ENCODE measurements at regions of chr1 and their contacts with region 1.

Region 1: DNA sequence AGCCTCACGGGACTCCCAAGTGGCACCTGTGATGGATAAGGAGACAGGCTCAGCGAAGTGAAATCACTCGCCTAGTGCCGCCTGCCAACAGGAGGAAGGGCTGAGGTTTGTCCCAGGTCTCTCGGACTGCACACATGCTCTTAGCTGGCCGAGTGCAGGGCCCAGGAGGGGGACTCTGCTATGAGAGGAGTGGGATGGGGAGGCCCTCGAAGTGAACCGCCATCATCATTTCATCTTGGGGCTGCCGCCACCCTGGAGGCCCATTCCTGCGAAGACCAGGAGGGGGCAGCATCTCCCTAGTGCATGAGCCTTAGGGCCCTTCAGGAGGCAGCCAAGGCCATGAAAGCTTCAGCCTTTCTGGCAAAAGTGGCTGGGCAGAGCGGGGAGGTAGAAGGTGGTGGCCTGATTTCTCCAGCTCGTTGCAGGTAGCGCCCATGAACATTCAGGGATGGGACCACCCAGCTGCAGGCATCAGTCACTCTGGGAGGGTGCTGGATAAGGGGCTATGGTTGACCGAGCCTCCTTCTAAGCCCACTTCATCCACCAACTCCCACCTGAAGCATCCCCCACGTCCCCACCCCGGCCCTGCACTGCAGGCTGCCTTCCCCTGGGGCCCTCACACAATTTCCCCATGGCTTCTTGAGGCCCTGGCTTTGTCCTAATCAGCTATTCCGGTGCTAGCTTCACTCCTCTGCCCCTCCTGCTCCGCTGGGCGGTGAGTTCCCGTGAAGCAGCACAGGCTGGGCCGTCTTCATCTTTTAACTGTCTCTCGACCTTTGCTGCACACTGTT is 17.2 kb upstream of the RASSF5 start:
- DNase-seq: peak; percentile 47
- H3K4me3 ChIP-seq: no peak overlapping the region
- H3K27ac ChIP-seq: no peak overlapping the region
- H3K4me1 ChIP-seq: no peaks in the 10 kb centered on the region
- H3K27me3 ChIP-seq: no peaks in the 10 kb centered on the region
- CTCF ChIP-seq: peak; percentile 94 to 100

Region 2: DNA sequence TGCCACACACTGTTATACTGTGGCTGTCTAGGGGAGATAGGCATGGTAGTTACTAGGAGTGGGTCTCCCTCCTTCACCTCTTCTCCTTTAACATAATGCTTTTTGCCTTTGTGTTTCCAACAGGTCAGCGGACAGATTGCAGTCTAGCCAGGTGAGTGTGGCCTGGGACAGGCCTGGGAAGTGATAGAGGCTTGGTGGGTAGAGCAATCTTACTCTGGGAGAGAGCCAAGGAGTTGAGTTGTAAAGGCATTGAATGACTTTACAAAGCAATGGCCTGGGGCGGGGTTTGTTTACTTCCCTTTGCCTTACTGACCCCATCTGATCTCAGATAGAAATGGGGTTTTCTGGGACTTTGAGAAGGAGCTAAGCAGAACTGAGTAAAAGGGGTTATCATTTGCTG is 70.9 kb before region 1 on chr1:
- CTCF ChIA-PET with region 1: no interaction called
- dilution Hi-C with region 1: no loop called
- in situ Hi-C with region 1: no loop called
- intact Hi-C with region 1: no loop called
- DNase-seq: peak; percentile 41
- H3K4me3 ChIP-seq: no peak overlapping the region
- H3K27ac ChIP-seq: peak overlapping the region; percentile 26
- H3K4me1 ChIP-seq: peaks cover 19% of the 10 kb centered on the region
- H3K27me3 ChIP-seq: no peaks in the 10 kb centered on the region
- CTCF ChIP-seq: no peak

Region 3: GRCh38 chr1:206521143-206521542 is 31.0 kb after region 1 on chr1:
- CTCF ChIA-PET with region 1: no interaction called
- dilution Hi-C with region 1: no loop called
- in situ Hi-C with region 1: no loop called
- intact Hi-C with region 1: no loop called
- DNase-seq: no peak
- H3K4me3 ChIP-seq: no peak overlapping the region
- H3K27ac ChIP-seq: no peak overlapping the region
- H3K4me1 ChIP-seq: peaks cover 12% of the 10 kb centered on the region
- H3K27me3 ChIP-seq: no peaks in the 10 kb centered on the region
- CTCF ChIP-seq: no peak

Region 4: GRCh38 chr1:206534552-206534951 is 44.4 kb after region 1 on chr1:
- CTCF ChIA-PET with region 1: no interaction called
- dilution Hi-C with region 1: loop called (anchors 5 kb)
- in situ Hi-C with region 1: no loop called
- intact Hi-C with region 1: no loop called
- DNase-seq: no peak
- H3K4me3 ChIP-seq: no peak overlapping the region
- H3K27ac ChIP-seq: no peak overlapping the region
- H3K4me1 ChIP-seq: peaks cover 17% of the 10 kb centered on the region
- H3K27me3 ChIP-seq: no peaks in the 10 kb centered on the region
- CTCF ChIP-seq: no peak

Region 5: GRCh38 chr1:206590025-206590758 is 100.0 kb after region 1 on chr1:
- CTCF ChIA-PET with region 1: interaction called, 4 read pairs
- dilution Hi-C with region 1: loop called (anchors 5 kb)
- in situ Hi-C with region 1: no loop called
- intact Hi-C with region 1: no loop called
- DNase-seq: peak; percentile 96
- H3K4me3 ChIP-seq: no peak overlapping the region
- H3K27ac ChIP-seq: peak overlapping the region; percentile 26
- H3K4me1 ChIP-seq: peaks cover 48% of the 10 kb centered on the region
- H3K27me3 ChIP-seq: no peaks in the 10 kb centered on the region
- CTCF ChIP-seq: peak; percentile 35 to 36

Region 6: DNA sequence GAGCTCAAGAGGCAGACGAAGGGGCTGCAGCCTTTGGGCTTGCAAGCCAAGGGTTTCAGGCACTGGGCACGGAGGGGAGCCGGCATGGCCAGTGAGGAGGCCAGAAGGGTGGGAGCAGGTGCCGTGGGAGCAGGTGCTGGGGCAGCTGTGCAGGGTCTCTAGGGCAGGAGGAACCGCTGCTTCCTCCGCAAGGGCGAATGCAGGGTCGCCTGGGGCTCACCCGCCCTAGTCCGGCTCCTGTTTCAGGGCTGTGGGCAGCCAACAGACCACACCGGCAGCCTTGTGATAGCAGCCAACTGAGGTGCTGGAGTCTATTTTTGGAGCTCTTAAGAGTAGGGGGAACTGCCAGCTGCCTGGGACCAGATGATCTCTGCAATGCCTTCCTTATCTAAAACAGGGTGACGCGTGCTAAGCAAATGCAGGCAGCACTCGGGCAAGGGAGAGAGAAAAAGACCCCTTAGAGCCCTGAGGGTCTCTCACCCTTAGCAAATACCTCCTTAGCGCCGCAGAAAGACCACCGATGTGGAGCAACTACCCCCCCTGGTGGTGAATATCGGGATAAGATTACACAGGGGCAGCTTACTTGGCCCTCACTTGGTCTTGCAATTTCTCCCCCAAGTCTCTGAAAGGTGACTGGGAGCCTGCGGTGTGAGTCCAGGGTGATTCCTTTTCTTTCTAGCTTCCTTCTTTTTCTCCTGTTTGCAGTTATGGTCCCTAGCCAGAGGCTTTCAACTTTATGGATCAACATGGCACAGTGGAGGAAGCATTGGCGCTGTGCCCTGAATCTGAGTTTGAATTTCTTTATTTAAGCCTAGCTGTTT is 173.9 kb after region 1 on chr1:
- CTCF ChIA-PET with region 1: no interaction called
- dilution Hi-C with region 1: no loop called
- in situ Hi-C with region 1: loop called in 1 of 2 experiments (anchors 10 kb)
- intact Hi-C with region 1: loop called (anchors 1 kb)
- DNase-seq: peak; percentile 36
- H3K4me3 ChIP-seq: no peak overlapping the region
- H3K27ac ChIP-seq: no peak overlapping the region
- H3K4me1 ChIP-seq: peaks cover 5% of the 10 kb centered on the region
- H3K27me3 ChIP-seq: no peaks in the 10 kb centered on the region
- CTCF ChIP-seq: peak; percentile 79 to 85

Region 7: GRCh38 chr1:206676499-206676898 is 186.3 kb after region 1 on chr1:
- CTCF ChIA-PET with region 1: no interaction called
- dilution Hi-C with region 1: no loop called
- in situ Hi-C with region 1: no loop called
- intact Hi-C with region 1: no loop called
- DNase-seq: no peak
- H3K4me3 ChIP-seq: no peak overlapping the region
- H3K27ac ChIP-seq: no peak overlapping the region
- H3K4me1 ChIP-seq: peaks cover 17% of the 10 kb centered on the region
- H3K27me3 ChIP-seq: no peaks in the 10 kb centered on the region
- CTCF ChIP-seq: no peak

Region 8: GRCh38 chr1:206962272-206962671 is 472.1 kb after region 1 on chr1:
- CTCF ChIA-PET with region 1: no interaction called
- dilution Hi-C with region 1: loop called (anchors 5 kb)
- in situ Hi-C with region 1: no loop called
- intact Hi-C with region 1: no loop called
- DNase-seq: no peak
- H3K4me3 ChIP-seq: no peak overlapping the region
- H3K27ac ChIP-seq: no peak overlapping the region
- H3K4me1 ChIP-seq: peaks cover 13% of the 10 kb centered on the region
- H3K27me3 ChIP-seq: no peaks in the 10 kb centered on the region
- CTCF ChIP-seq: no peak